GM12878 (cell line): ENCODE measurements at regions of chr5 and their contacts with region 1.

Region 1: GRCh38 chr5:77630258-77631089 is 8.0 kb downstream of the OTP start:
- DNase-seq: no peak
- ATAC-seq: peak; percentile 87
- H3K4me3 ChIP-seq: peak overlapping the region; percentile 76
- H3K27ac ChIP-seq: peak overlapping the region; percentile 78
- H3K4me1 ChIP-seq: no peaks in the 10 kb centered on the region; the same call in 1 of the 2 replicates
- H3K27me3 ChIP-seq: peaks cover 0 to under 1% of the 10 kb centered on the region in 2 experiments; a peak in 1 of 4 replicates
- CTCF ChIP-seq: peak; percentile 30 to 57 (median 56); a peak in 5 of 6 replicates
- EP300 ChIP-seq: no peak
- POLR2A ChIP-seq: peak; percentile 90
- RAD21 ChIP-seq: peak; percentile 30; the same call in 1 of the 2 replicates

Region 2: DNA sequence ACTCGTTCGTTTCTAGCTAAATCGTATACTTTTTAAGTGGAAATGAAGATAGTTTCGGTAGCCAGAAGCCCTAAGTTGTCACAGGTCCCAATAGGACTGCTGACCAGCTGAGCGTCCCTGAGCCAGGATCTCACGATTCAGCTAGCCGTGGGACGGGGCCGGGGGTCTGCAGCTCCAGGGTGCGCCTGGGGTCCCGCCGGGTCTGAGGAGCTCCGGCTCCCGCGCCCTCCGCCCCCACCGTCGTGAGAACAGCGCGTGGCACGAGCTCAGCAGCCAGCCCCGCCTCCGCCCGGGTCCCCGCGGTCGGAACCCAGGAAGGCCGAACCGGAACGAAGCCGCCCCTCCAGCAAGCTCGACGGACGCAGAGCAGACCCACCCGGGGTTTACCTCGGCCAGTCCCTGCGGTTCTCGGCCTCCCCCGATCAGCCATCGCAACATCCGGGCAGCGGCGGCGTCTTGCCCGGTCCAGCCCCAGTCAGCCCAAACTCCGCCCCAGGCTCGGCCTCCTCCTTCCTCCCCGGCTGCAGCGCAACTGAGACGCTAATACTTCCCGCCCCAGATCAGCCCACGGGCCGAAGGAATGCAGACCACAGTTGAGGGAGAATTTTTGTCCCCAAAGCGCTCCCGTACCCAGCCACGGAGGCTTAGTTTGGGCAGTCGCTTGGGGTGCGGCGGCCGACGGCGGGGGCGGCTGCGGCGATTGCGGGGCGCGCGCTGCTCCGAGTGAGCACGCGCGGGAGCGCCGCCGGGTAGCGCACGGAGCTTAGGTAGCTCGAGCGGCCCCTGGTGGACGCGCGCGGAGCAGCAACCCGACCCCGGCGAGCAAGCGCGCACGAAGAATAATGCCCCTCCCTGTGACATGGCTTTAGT is 138.5 kb before region 1 on chr5 and contains the start of gene WDR41:
- CTCF ChIA-PET with region 1: interaction called, 4 read pairs
- POLR2A ChIA-PET with region 1: interaction called, 11 read pairs
- RAD21 ChIA-PET with region 1: interaction called, 17 read pairs
- SMC1A ChIA-PET with region 1: interaction called, 3 read pairs
- in situ Hi-C with region 1: no loop called
- intact Hi-C with region 1: loop called (anchors 5 kb)
- DNase-seq: peak; percentile 85
- ATAC-seq: peak; percentile 92
- H3K4me3 ChIP-seq: peak within 1 kb of the TSS; percentile 82
- H3K27ac ChIP-seq: peak within 1 kb of the TSS; percentile 96
- H3K4me1 ChIP-seq: peaks cover 4% of the 10 kb centered on the region
- H3K27me3 ChIP-seq: no peaks in the 10 kb centered on the region
- CTCF ChIP-seq: peak; percentile 88 to 93 (median 93)
- EP300 ChIP-seq: peak in 1 of 2 experiments; percentile 59; a peak in 2 of 4 replicates
- POLR2A ChIP-seq: peak; percentile 94
- RAD21 ChIP-seq: peak; percentile 53
- polyA plus RNA-seq, gene WDR41: 60.0 to 86.4 TPM

Region 3: DNA sequence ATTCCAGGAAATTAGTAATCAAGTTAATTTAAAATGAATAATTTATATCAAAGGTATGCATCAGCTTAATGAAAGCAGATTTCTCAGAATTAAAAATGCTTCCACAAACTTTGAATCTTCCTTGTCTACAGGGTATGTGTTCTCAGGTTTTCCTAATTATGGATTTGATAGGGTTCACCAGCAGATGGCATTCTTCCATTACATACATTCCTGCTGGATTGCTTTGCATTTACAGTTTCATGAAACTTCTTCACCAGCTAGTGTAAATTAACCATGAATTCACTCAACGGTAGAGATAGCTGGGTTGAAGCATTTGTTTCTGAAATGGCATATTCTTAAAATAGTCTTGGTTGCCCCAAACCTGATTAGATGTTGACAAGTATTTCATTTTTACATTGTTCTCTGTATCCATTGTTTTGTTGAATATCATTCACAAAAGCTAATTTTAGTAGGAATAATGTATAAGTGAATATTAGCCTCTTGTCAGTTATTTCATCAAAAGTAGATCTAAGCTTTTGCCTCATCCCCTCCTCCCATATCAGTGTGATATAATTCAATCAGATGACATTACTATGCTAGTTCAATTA is 69.7 kb before region 1 on chr5:
- CTCF ChIA-PET with region 1: interaction called, 33 read pairs
- POLR2A ChIA-PET with region 1: interaction called, 5 read pairs
- RAD21 ChIA-PET with region 1: interaction called, 40 read pairs
- SMC1A ChIA-PET with region 1: interaction called, 26 read pairs
- in situ Hi-C with region 1: no loop called
- intact Hi-C with region 1: loop called (anchors 2 kb)
- DNase-seq: peak; percentile 48
- ATAC-seq: peak; percentile 65
- H3K4me3 ChIP-seq: no peak overlapping the region
- H3K27ac ChIP-seq: no peak overlapping the region
- H3K4me1 ChIP-seq: no peaks in the 10 kb centered on the region
- H3K27me3 ChIP-seq: no peaks in the 10 kb centered on the region
- CTCF ChIP-seq: peak; percentile 29 to 62 (median 45); a peak in 5 of 6 replicates
- EP300 ChIP-seq: no peak
- POLR2A ChIP-seq: no peak
- RAD21 ChIP-seq: peak; percentile 87

Region 4: GRCh38 chr5:77620426-77620825 is 10.0 kb before region 1 on chr5:
- CTCF ChIA-PET with region 1: interaction called, 4 read pairs
- POLR2A ChIA-PET with region 1: interaction called, 6 read pairs
- RAD21 ChIA-PET with region 1: interaction called, 4 read pairs
- SMC1A ChIA-PET with region 1: interaction called, 11 read pairs
- in situ Hi-C with region 1: no loop called
- intact Hi-C with region 1: no loop called
- DNase-seq: no peak
- ATAC-seq: peak; percentile 65
- H3K4me3 ChIP-seq: no peak overlapping the region
- H3K27ac ChIP-seq: no peak overlapping the region
- H3K4me1 ChIP-seq: no peaks in the 10 kb centered on the region
- H3K27me3 ChIP-seq: no peaks in the 10 kb centered on the region; a peak in 1 of 4 replicates
- CTCF ChIP-seq: peak in 1 of 3 experiments; percentile 11; a peak in 1 of 6 replicates
- EP300 ChIP-seq: no peak
- POLR2A ChIP-seq: no peak
- RAD21 ChIP-seq: no peak

Region 5: GRCh38 chr5:77775790-77776553 is 145.5 kb after region 1 on chr5 and contains the start of gene TBCA:
- CTCF ChIA-PET with region 1: interaction called, 4 read pairs
- POLR2A ChIA-PET with region 1: interaction called, 8 read pairs
- RAD21 ChIA-PET with region 1: interaction called, 15 read pairs
- SMC1A ChIA-PET with region 1: interaction called, 13 read pairs
- in situ Hi-C with region 1: no loop called
- intact Hi-C with region 1: loop called (anchors 5 kb)
- DNase-seq: peak; percentile 78
- ATAC-seq: peak; percentile 88
- H3K4me3 ChIP-seq: peak within 1 kb of the TSS; percentile 89
- H3K27ac ChIP-seq: peak within 1 kb of the TSS; percentile 95
- H3K4me1 ChIP-seq: peaks cover 4% of the 10 kb centered on the region; the same call in 1 of the 2 replicates
- H3K27me3 ChIP-seq: no peaks in the 10 kb centered on the region
- CTCF ChIP-seq: peak in 2 of 3 experiments; percentile 31 to 39; a peak in 3 of 6 replicates
- EP300 ChIP-seq: no peak; a peak in 1 of 4 replicates
- POLR2A ChIP-seq: peak; percentile 86
- RAD21 ChIP-seq: peak; percentile 27; the same call in 1 of the 2 replicates
- polyA plus RNA-seq, gene TBCA: 567 to 647 TPM

Region 6: DNA sequence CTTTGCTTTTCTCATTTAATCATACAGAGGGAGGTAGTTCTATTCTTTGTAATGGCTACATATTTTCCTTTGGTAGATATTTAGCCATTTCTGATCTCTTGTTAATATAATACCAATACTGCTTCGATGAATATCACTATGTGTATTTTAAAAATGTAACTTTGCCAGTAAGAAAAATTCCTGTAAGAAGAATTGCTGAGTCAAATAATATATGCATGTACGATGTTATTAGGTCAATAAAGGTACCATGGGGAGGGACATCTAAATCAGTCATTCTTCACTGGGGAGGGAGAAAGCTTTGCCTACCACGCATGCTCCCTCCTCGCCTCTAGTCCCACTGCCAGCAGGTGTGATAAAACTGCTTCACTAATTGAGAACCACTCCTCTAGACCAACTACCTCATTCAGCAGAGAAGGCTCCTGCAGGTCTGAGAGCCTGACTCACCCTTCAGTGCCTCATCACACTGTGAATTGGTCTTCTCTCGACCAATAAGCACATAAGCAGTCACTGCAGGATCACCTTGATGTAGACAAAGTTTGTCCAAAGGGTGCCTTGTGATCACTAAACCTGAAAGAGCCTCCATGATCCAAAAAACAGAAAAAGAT is 201.8 kb after region 1 on chr5:
- CTCF ChIA-PET with region 1: no interaction called
- POLR2A ChIA-PET with region 1: no interaction called
- RAD21 ChIA-PET with region 1: no interaction called
- SMC1A ChIA-PET with region 1: no interaction called
- in situ Hi-C with region 1: no loop called
- intact Hi-C with region 1: no loop called
- DNase-seq: no peak
- ATAC-seq: no peak
- H3K4me3 ChIP-seq: no peak overlapping the region
- H3K27ac ChIP-seq: no peak overlapping the region
- H3K4me1 ChIP-seq: no peaks in the 10 kb centered on the region
- H3K27me3 ChIP-seq: no peaks in the 10 kb centered on the region
- CTCF ChIP-seq: no peak
- EP300 ChIP-seq: no peak
- POLR2A ChIP-seq: no peak
- RAD21 ChIP-seq: no peak

Region 7: DNA sequence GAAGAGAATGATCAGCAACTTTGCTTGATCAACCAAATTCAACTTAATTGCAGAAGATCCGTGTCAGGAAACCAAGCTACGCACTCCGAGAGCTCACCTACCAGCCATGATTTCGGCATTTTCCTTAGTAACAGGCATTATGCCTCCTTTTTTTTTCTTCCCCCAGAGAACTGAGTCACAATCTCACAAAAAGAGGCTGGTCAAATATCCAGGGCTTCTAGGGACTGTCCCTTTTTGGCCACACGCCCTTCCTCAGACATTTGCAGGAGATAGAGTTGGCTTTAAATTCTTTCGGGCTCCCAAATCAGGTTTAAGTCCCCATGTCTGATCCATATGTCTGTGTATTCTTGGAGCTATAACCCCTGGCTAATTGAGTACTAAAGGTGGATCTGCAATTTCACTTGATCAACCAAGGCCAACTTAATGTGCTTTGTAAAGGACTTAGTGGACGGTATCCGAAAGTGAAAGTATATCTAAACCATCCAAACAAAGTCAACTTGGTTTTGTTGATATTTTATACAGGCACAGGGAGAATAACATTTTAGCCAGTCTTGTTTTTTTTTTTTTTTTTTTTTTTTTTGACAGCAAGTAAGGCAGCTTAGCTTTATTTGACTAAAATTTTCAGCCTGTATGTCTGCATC is 246.5 kb after region 1 on chr5:
- CTCF ChIA-PET with region 1: no interaction called
- POLR2A ChIA-PET with region 1: interaction called, 5 read pairs
- RAD21 ChIA-PET with region 1: interaction called, 18 read pairs
- SMC1A ChIA-PET with region 1: interaction called, 5 read pairs
- in situ Hi-C with region 1: no loop called
- intact Hi-C with region 1: no loop called
- DNase-seq: no peak
- ATAC-seq: no peak
- H3K4me3 ChIP-seq: no peak overlapping the region
- H3K27ac ChIP-seq: no peak overlapping the region
- H3K4me1 ChIP-seq: peaks cover 23% of the 10 kb centered on the region
- H3K27me3 ChIP-seq: no peaks in the 10 kb centered on the region
- CTCF ChIP-seq: no peak
- EP300 ChIP-seq: no peak
- POLR2A ChIP-seq: no peak
- RAD21 ChIP-seq: no peak

Region 8: GRCh38 chr5:78162253-78162862 is 531.9 kb after region 1 on chr5:
- CTCF ChIA-PET with region 1: interaction called, 3 read pairs
- POLR2A ChIA-PET with region 1: interaction called, 3 read pairs
- RAD21 ChIA-PET with region 1: interaction called, 3 read pairs
- SMC1A ChIA-PET with region 1: interaction called, 3 read pairs
- in situ Hi-C with region 1: no loop called
- intact Hi-C with region 1: loop called (anchors 5 kb)
- DNase-seq: no peak
- ATAC-seq: peak; percentile 61
- H3K4me3 ChIP-seq: no peak overlapping the region
- H3K27ac ChIP-seq: no peak overlapping the region
- H3K4me1 ChIP-seq: no peaks in the 10 kb centered on the region
- H3K27me3 ChIP-seq: no peaks in the 10 kb centered on the region
- CTCF ChIP-seq: peak; percentile 47 to 66 (median 47); a peak in 5 of 6 replicates
- EP300 ChIP-seq: no peak
- POLR2A ChIP-seq: no peak
- RAD21 ChIP-seq: peak; percentile 82